ENCODE measurements at regions of chr3 and their contacts with region 1.

Region 1: DNA sequence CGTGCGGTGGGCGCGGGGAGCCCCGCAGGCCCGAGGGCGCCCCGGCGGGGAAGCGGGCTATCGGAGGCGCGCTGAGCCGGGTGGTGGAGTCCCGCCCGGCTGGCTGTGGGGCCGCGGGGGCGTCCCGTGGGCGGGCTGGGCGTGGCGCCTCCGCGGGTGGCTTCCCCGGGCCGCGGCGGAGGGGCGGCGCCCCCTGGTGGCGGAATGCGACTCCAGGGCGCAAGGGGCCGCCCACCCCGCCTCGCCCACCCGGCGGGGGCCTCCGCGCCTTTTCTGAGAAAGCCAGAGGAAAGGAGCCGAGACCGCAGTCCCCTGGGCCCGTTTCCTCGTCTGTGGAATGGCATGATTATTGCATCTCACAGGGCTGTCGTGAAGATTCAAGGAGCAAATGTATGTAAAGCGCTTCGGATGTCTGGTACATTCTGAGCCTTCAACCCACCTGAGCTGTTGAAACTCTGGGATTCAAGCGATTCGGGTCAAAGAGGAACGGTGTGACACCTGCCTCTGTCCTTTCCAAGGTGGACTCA is 31.9 kb upstream of the RAB6B start:
- DNase-seq: peak in 6 of 7 donors; percentile 38 to 63 (median 52)
- H3K4me3 ChIP-seq: peak overlapping the region in 2 of 4 donors; percentile 18 to 80
- H3K27ac ChIP-seq: no peak overlapping the region
- H3K4me1 ChIP-seq: peaks cover 0 to 5% of the 10 kb centered on the region in 2 donors
- H3K27me3 ChIP-seq: no peaks in the 10 kb centered on the region
- CTCF ChIP-seq: peak; percentile 13 to 88 (median 62)
- POLR2A ChIP-seq: no peak

Region 2: DNA sequence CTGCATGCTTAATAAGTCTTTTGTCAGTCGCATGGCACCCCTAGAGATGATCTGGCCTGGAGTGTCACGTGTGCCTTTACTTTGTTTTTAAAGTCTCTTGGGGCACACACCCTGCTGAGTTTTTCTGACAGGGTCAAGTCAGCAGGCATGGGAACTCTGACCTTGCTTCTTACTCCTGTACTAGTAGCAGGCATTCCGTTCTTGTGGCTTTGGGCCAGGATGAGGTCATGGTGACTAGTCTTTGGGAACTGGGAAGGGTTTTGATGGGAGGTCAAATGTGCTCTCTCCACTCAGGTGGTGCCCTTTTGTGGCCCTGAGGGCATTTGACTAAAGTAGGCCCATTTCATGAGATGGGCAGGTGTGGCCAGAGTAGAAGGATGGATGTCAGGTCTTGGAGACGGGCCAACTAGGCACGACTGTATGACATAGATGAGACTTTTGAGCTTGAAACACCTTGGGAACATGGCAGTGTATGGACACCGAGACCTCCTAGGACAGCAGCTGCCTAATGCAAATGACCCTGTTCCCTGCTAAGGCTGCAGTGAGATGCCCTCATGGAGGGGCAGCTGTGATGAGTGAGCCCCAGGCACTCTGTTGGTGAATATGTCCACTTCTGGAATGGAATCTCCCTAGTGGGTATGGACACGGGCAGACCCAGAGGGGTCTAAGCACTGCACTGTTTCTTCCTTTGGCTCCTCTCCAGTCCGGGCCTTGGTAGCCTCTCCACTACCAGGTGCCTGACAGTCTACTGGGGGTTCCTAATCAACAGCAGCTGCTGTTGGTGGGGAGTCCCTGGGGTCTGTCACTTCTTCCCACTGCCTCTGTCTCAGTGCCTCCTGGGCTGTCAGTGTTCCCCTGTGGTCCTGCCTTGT is 105.6 kb before region 1 on chr3:
- intact Hi-C with region 1: loop called (anchors 5 kb)
- DNase-seq: peak; percentile 65 to 93 (median 88)
- H3K4me3 ChIP-seq: no peak overlapping the region
- H3K27ac ChIP-seq: peak overlapping the region in 2 of 5 donors; percentile 7 to 26
- H3K4me1 ChIP-seq: no peaks in the 10 kb centered on the region
- H3K27me3 ChIP-seq: no peaks in the 10 kb centered on the region
- CTCF ChIP-seq: peak in 1 of 6 experiments; percentile 42
- POLR2A ChIP-seq: no peak

Measured in adrenal gland (tissue), 19 donors.